A673 (cell line): ENCODE measurements at regions of chr11 and their contacts with region 1.

Region 1: DNA sequence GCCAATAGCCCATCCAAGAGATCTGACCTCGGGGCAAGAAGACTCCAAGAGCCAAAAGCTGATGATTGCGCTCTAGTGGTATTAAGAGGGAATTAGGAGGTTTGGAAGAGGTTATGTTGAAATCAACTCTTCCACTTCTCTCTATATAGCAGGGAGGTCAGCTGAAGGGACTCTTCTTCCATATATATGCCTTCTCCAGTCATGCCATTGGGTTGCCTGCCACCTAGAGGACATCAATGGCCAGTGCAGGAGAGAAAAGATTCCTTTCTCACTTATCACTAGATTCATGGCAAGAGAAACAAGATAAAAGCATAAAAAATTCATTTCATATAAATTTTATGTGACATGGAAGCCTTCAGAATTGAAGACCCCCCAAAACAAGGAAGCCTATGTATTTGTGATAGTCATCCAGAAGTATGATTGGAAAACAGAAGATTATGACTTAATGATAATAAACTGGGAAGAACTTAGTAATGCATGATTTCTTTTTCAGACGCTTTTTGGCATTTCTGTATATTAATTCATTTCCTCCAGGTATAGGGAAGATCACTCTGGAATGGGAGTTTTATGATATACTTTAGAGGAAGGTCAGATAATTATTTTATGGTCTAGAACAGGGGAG is 435.1 kb upstream of the DDI1 start:
- DNase-seq: peak; percentile 80
- H3K4me3 ChIP-seq: no peak overlapping the region
- H3K27ac ChIP-seq: no peak overlapping the region
- H3K4me1 ChIP-seq: peaks cover 23% of the 10 kb centered on the region
- H3K27me3 ChIP-seq: peaks cover 66% of the 10 kb centered on the region
- CTCF ChIP-seq: peak; percentile 98

Region 2: GRCh38 chr11:103202048-103202651 is 399.2 kb before region 1 on chr11:
- CTCF ChIA-PET with region 1: interaction called, 3 read pairs
- POLR2A ChIA-PET with region 1: no interaction called
- intact Hi-C with region 1: loop called (anchors 1 kb)
- DNase-seq: peak; percentile 70
- H3K4me3 ChIP-seq: no peak overlapping the region
- H3K27ac ChIP-seq: no peak overlapping the region
- H3K4me1 ChIP-seq: no peaks in the 10 kb centered on the region
- H3K27me3 ChIP-seq: no peaks in the 10 kb centered on the region
- CTCF ChIP-seq: peak; percentile 88

Region 3: GRCh38 chr11:103215812-103216211 is 385.5 kb before region 1 on chr11:
- CTCF ChIA-PET with region 1: no interaction called
- POLR2A ChIA-PET with region 1: interaction called, 11 read pairs
- intact Hi-C with region 1: no loop called
- DNase-seq: no peak
- H3K4me3 ChIP-seq: no peak overlapping the region
- H3K27ac ChIP-seq: no peak overlapping the region
- H3K4me1 ChIP-seq: no peaks in the 10 kb centered on the region
- H3K27me3 ChIP-seq: no peaks in the 10 kb centered on the region
- CTCF ChIP-seq: no peak

Region 4: DNA sequence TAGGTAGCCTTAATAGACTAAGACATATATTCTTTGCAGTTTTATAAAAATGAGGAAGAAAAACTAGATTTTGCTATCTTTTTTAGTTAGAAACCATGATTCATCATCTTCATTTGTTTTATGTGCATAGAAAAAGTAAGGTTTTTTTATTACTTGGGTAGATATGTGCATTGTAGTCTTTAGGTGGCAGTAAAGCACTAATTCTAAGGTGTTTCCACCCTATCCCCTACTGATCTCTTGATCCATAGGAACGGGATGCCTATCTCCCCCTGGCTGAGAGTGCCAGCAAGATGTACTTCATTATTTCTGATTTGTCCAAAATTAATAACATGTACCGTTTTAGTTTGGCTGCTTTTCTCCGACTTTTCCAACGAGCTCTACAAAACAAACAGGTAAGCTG is 344.0 kb before region 1 on chr11:
- CTCF ChIA-PET with region 1: no interaction called
- POLR2A ChIA-PET with region 1: no interaction called
- intact Hi-C with region 1: loop called (anchors 5 kb)
- DNase-seq: peak; percentile 46
- H3K4me3 ChIP-seq: no peak overlapping the region
- H3K27ac ChIP-seq: no peak overlapping the region
- H3K4me1 ChIP-seq: no peaks in the 10 kb centered on the region
- H3K27me3 ChIP-seq: no peaks in the 10 kb centered on the region
- CTCF ChIP-seq: peak; percentile 40

Region 5: GRCh38 chr11:103326070-103326794 is 275.1 kb before region 1 on chr11:
- CTCF ChIA-PET with region 1: no interaction called
- POLR2A ChIA-PET with region 1: no interaction called
- intact Hi-C with region 1: loop called (anchors 1 kb)
- DNase-seq: peak; percentile 89
- H3K4me3 ChIP-seq: no peak overlapping the region
- H3K27ac ChIP-seq: no peak overlapping the region
- H3K4me1 ChIP-seq: peaks cover 4% of the 10 kb centered on the region
- H3K27me3 ChIP-seq: no peaks in the 10 kb centered on the region
- CTCF ChIP-seq: peak; percentile 93